ENCODE measurements at regions of chr1 and their contacts with region 1.

Region 1: GRCh38 chr1:20493839-20494608 is 8.0 kb upstream of the CAMK2N1 start:
- DNase-seq: peak; percentile 98
- H3K4me3 ChIP-seq: peak overlapping the region in 1 of 3 experiments; percentile 13
- H3K27ac ChIP-seq: peak overlapping the region; percentile 90
- H3K4me1 ChIP-seq: peaks cover 23% of the 10 kb centered on the region
- H3K27me3 ChIP-seq: no peaks in the 10 kb centered on the region
- CTCF ChIP-seq: peak; percentile 89 to 96
- POLR2A ChIP-seq: no peak

Region 2: GRCh38 chr1:19918057-19918456 is 576.0 kb before region 1 on chr1:
- CTCF ChIA-PET with region 1: interaction called, 5 read pairs
- POLR2A ChIA-PET with region 1: no interaction called
- dilution Hi-C with region 1: no loop called
- intact Hi-C with region 1: loop called (anchors 1 kb)
- DNase-seq: peak; percentile 72
- H3K4me3 ChIP-seq: no peak overlapping the region
- H3K27ac ChIP-seq: no peak overlapping the region
- H3K4me1 ChIP-seq: no peaks in the 10 kb centered on the region
- H3K27me3 ChIP-seq: no peaks in the 10 kb centered on the region
- CTCF ChIP-seq: peak; percentile 85 to 87
- POLR2A ChIP-seq: no peak

Region 3: DNA sequence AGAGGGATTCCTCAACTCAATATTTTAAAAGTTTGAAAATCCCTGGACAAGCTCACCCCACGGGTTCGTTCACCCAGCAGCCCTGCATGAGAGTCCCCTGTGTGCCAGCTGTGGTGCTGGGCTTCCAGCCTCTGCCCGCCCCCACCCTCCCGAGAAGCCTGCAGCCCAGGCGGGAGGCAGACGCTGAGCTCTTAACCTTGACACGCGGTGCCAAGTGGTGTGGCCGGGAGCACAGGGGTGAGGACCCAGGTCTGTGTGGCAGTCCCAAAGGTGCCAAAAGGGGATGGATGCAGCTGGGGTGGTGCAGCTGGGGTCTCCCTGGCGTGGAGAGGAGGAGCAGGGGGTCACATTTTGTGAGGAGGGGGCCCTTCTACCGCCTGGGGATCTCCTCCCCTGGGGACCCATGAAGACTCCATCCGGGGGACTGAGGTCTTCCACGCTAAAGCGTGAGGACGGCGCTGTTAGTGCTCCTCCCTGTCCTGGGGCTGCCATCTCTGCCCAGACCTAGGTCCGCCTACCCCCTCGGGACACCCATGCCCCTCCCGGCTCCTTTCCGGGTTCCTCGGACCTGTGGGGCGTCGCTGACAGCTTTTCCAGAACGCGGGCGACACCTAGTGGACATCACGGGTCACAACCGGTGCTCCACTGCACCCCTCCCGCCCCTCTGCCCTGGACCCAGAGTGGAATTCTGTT is 342.0 kb before region 1 on chr1:
- CTCF ChIA-PET with region 1: interaction called, 3 read pairs
- POLR2A ChIA-PET with region 1: no interaction called
- dilution Hi-C with region 1: no loop called
- intact Hi-C with region 1: loop called (anchors 1 kb)
- DNase-seq: peak; percentile 42
- H3K4me3 ChIP-seq: peak overlapping the region in 1 of 3 experiments; percentile 7
- H3K27ac ChIP-seq: no peak overlapping the region
- H3K4me1 ChIP-seq: peaks cover 4% of the 10 kb centered on the region
- H3K27me3 ChIP-seq: no peaks in the 10 kb centered on the region
- CTCF ChIP-seq: peak; percentile 87 to 91
- POLR2A ChIP-seq: no peak

Region 4: DNA sequence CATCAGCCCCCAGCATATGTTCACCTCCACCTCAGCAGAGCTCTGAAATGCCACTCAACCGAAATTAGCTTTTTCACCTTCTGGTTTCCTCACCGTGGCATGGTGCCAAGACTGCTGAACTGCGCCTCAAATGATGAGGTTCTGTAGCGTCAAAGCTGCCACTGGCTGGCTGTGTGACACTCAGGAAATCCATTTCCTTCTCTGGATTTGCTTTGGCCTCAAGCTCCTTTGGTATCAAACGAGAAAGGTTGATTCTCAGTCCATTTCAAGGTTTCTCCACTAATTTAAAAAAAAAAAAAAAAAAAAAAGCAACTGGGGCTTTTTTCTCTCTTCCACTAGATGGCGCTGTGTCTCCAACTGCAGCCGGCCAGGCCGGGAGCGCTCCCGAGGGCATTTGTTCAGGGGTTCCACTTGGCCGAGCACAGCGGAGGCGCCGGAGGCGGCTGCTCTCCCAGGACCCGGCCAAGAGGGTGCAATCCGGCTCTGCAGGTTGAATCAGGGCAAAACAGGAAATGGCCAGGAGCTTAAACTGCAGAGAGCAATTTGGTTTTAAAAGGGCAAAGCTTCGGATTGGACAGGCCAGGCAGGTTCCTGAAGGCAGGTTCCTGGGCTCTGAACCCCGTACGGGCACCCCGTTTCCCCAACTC is 281.2 kb before region 1 on chr1:
- CTCF ChIA-PET with region 1: interaction called, 67 read pairs
- POLR2A ChIA-PET with region 1: no interaction called
- dilution Hi-C with region 1: no loop called
- intact Hi-C with region 1: loop called (anchors 1 kb)
- DNase-seq: peak; percentile 39
- H3K4me3 ChIP-seq: no peak overlapping the region
- H3K27ac ChIP-seq: no peak overlapping the region
- H3K4me1 ChIP-seq: no peaks in the 10 kb centered on the region
- H3K27me3 ChIP-seq: peaks cover 7% of the 10 kb centered on the region in 2 experiments
- CTCF ChIP-seq: peak; percentile 76 to 79
- POLR2A ChIP-seq: no peak

Region 5: DNA sequence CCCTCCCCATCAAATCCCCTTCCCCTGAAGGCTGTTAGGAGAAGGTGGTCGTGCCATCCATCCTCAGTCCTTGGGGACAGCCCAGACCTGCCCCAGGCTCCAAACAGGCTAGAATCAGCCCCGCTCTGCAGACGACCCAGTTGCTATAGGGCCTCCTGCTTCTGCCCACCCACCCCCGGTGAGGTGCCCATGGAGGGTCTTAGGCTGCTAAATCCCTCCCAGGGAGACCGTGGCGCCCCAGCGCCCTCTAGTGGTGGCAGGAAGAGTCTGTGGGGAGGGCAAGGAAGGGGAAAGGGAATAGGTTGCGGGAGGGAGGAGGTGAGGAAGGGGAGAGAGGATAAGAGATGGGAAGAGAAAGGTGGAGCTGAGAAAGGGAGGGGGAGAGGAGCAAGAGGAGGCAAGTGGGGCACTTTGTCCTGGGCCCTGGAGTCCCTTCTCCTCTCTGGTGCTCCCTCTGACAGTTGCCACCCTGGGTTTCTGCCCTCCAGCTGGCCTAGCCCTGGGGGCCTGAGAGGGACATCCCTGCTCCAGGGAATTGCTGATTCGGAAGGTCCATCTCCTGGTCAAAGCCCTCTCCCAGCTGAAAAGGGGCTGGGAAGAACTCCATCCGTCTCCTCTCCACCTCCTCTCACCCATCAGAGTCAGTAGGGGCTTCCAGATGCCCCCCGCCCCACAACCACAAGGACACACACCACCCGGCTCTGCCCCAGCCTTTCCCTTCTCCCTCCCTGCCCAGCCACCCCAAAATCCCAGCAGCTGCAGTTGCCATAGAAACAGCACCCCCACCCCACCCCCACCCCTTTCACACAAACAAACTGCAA is 63.5 kb before region 1 on chr1:
- CTCF ChIA-PET with region 1: interaction called, 5 read pairs
- POLR2A ChIA-PET with region 1: no interaction called
- dilution Hi-C with region 1: no loop called
- intact Hi-C with region 1: loop called (anchors 2 kb)
- DNase-seq: peak; percentile 34
- H3K4me3 ChIP-seq: no peak overlapping the region
- H3K27ac ChIP-seq: no peak overlapping the region
- H3K4me1 ChIP-seq: peaks cover 8% of the 10 kb centered on the region
- H3K27me3 ChIP-seq: no peaks in the 10 kb centered on the region
- CTCF ChIP-seq: peak; percentile 64 to 79
- POLR2A ChIP-seq: no peak

Measured in endothelial cell of umbilical vein (primary cell).